K562 (cell line): ENCODE measurements at regions of chr14 and their contacts with region 1.

Region 1: GRCh38 chr14:93112891-93113677 is 2.6 kb downstream of the ITPK1 start:
- DNase-seq: peak; percentile 47 to 80 (median 52)
- ATAC-seq: peak; percentile 69
- H3K4me3 ChIP-seq: no peak overlapping the region
- H3K27ac ChIP-seq: peak overlapping the region; percentile 57; the same call in 1 of the 3 replicates
- H3K4me1 ChIP-seq: peaks cover 13 to 29% of the 10 kb centered on the region in 2 experiments; a peak in 4 of 5 replicates
- H3K27me3 ChIP-seq: no peaks in the 10 kb centered on the region
- CTCF ChIP-seq: peak; percentile 64 to 73 (median 66)
- EP300 ChIP-seq: no peak
- POLR2A ChIP-seq: no peak
- RAD21 ChIP-seq: peak; percentile 28 to 63

Region 2: DNA sequence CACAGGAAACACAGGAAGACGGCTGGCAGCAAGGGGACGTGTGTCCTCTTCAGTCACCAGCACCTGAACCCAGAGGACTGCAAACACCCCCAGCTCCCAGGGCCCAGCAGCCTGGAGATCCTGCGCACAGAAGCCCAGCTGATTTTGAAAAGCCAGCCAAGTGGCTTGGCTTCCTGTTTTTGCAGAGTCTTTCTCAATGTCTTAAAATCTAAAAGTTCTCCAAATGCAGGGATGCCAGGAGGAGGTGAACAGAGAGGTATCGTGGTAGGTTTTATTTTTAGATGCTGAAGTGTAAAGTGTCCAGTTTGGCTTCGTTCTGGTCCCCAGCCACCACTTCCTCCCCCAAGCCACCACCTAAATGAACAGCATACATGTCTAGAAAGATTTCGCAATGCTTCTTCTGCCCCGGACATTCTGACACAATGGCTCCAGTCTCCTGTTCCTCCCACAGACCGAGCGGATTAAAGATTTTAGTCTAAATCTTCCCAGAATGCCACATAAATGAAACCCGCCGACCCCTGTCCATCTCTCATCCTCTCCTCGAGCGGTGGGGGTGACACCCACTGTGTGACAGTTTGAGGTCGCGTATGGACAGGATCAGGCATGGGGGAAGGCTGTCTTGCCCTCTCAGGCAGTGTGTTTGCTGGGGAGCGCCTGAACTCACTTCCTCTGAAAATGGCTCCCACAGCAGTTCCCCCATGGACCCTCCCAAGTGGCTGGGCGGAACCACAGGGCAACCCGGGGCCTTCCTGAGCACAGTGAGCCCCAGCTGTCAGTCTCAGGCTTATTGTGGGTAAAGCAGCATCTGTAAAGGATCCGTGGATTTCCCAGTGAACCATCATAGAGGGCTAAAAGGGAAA is 38.9 kb before region 1 on chr14:
- CTCF ChIA-PET with region 1: no interaction called
- POLR2A ChIA-PET with region 1: no interaction called
- in situ Hi-C with region 1: no loop called
- intact Hi-C with region 1: loop called (anchors 2 kb)
- DNase-seq: no peak
- ATAC-seq: peak; percentile 62
- H3K4me3 ChIP-seq: no peak overlapping the region
- H3K27ac ChIP-seq: peak overlapping the region; percentile 30; the same call in 1 of the 3 replicates
- H3K4me1 ChIP-seq: peaks cover 10 to 15% of the 10 kb centered on the region in 2 experiments
- H3K27me3 ChIP-seq: no peaks in the 10 kb centered on the region
- CTCF ChIP-seq: no peak
- EP300 ChIP-seq: no peak
- POLR2A ChIP-seq: no peak
- RAD21 ChIP-seq: no peak

Region 3: DNA sequence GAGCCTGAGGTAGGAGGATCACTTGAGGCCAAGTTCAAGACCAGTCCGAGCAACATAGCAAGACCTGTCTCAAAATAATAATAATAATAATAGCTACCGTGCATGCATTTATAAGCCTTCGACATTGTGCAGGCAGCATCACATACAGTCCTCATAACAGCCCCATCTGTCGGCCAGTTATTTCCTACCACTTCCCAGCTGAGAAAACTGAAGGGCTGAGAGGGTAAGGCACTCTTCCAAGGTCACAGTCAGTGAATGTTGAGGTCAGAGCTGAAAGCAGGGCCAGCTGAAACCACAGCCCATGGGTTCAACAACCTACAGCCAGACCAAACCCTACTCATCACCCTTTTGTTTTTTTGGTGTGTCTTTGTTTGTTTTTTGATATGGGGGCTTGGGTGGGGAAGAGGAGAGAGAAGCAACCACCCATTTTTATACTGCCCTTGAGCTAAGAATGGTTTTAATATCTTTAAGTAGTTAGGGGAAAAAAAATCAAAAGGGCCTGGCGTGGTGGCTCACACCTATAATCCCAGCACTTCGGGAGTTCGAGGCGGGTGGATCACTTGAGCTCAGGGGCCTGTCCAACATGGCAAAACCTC is 19.5 kb after region 1 on chr14:
- CTCF ChIA-PET with region 1: interaction called, 22 read pairs
- POLR2A ChIA-PET with region 1: interaction called, 4 read pairs
- in situ Hi-C with region 1: no loop called
- intact Hi-C with region 1: loop called (anchors 1 kb)
- DNase-seq: peak in 2 of 4 experiments; percentile 13 to 41
- ATAC-seq: peak; percentile 90
- H3K4me3 ChIP-seq: no peak overlapping the region
- H3K27ac ChIP-seq: no peak overlapping the region
- H3K4me1 ChIP-seq: no peaks in the 10 kb centered on the region; a peak in 1 of 5 replicates
- H3K27me3 ChIP-seq: peaks cover 0 to 10% of the 10 kb centered on the region in 2 experiments; a peak in 4 of 5 replicates
- CTCF ChIP-seq: peak; percentile 43 to 52 (median 46); a peak in 5 of 6 replicates
- EP300 ChIP-seq: no peak
- POLR2A ChIP-seq: no peak
- RAD21 ChIP-seq: peak in 1 of 2 experiments; percentile 44; a peak in 1 of 4 replicates

Region 4: DNA sequence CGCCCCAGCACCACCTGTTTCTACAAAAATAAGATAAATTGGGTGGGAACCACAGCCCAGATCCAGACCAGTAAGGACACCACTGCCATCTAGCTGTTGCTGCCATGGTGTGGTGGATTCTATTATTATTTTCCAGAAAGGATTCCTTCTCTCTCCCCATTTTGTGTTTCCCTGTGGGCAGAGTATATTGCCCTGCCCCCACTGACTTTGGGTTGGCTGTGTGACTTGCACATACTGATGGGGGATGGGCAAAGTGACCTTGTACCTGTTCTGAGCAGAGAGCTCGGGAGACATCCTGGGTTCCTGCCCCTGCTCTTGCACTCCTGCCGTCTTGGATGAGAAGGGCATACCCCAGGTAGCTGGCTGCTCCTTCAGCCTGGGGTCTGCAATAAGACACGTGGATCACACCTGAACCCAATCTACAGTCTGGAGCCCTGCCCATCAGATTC is 47.3 kb after region 1 on chr14:
- CTCF ChIA-PET with region 1: interaction called, 11 read pairs
- POLR2A ChIA-PET with region 1: no interaction called
- in situ Hi-C with region 1: no loop called
- intact Hi-C with region 1: loop called (anchors 1 kb)
- DNase-seq: peak; percentile 42 to 70 (median 56)
- ATAC-seq: peak; percentile 88
- H3K4me3 ChIP-seq: no peak overlapping the region
- H3K27ac ChIP-seq: no peak overlapping the region
- H3K4me1 ChIP-seq: no peaks in the 10 kb centered on the region; a peak in 1 of 5 replicates
- H3K27me3 ChIP-seq: no peaks in the 10 kb centered on the region
- CTCF ChIP-seq: peak; percentile 8 to 61 (median 56); a peak in 4 of 6 replicates
- EP300 ChIP-seq: no peak
- POLR2A ChIP-seq: no peak
- RAD21 ChIP-seq: peak in 1 of 2 experiments; percentile 41; a peak in 2 of 4 replicates